HEK293 (cell line): ENCODE measurements at regions of chr14 and their contacts with region 1.

Region 1: DNA sequence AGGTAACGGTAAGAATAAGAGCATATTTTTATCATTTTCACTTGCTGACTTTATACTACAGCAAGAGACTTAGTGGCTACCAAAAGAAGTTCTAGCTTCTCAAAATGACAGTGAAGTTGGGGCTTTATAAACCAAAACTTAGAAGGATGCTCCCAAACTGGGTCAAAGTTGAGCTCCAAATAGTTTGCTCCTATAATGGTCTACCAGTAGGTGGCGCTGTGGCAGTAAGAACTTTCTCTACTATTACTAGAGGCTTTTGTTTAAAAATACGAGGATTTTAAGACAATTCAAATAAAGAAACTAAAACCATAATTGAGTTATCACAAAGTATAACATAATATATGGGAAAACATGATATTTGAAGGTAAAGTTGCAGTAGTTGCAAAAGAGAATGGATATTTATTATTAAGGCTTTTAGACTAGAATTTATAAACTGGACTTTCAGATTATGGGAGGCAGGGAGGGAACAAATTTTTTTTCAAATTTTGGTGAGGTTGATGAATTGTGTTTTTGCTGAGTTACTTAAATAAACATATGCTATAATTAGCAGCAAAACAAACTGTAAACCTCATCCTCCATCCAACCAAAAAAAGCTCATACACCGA is 75.0 kb downstream of the TGFB3 start:
- H3K4me3 ChIP-seq: no peak overlapping the region
- H3K27ac ChIP-seq: no peak overlapping the region
- H3K4me1 ChIP-seq: peaks cover 17% of the 10 kb centered on the region
- CTCF ChIP-seq: 0 out of 2 replicates have a peak, but pooled peaks have one; percentile 6

Region 2: GRCh38 chr14:75794615-75795038 is 112.2 kb before region 1 on chr14:
- CTCF ChIA-PET with region 1: interaction called, 16 read pairs
- POLR2A ChIA-PET with region 1: no interaction called
- H3K4me3 ChIP-seq: no peak overlapping the region
- H3K27ac ChIP-seq: no peak overlapping the region
- H3K4me1 ChIP-seq: no peaks in the 10 kb centered on the region
- CTCF ChIP-seq: peak; percentile 70

Region 3: GRCh38 chr14:75884198-75884611 is 22.6 kb before region 1 on chr14:
- CTCF ChIA-PET with region 1: interaction called, 12 read pairs
- POLR2A ChIA-PET with region 1: no interaction called
- H3K4me3 ChIP-seq: no peak overlapping the region
- H3K27ac ChIP-seq: no peak overlapping the region
- H3K4me1 ChIP-seq: no peaks in the 10 kb centered on the region
- CTCF ChIP-seq: no peak

Region 4: DNA sequence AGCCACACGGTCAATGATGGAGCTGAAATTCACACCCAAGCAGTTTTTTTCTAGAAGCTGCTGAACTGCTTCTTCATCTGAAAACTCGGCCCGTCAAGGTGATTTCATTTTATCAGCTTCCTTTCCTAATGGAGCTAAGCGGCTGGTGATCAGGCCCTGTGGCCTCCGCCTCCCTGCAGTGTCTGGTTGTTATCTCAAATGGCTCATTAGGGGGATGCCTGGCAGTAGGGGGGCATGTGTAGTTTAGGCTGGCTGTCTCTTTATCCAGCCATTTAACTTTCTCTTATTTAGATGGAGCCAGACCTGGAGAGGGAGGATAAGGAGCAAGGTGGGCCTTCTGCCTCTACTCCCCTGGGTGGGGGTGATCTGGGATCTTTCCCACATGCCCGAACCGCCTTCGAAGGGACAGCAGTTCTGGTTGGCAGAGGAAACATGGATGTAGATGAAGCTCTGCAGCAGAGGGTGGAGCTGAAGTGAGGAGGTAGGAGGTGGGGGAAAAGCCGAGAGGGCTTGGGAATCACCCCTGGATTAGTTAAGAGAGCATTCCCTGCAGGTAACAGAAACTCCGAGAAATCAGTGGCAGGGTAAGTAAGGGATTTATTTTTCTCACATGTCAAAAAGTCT is 10.7 kb after region 1 on chr14:
- CTCF ChIA-PET with region 1: interaction called, 28 read pairs
- POLR2A ChIA-PET with region 1: interaction called, 3 read pairs
- H3K4me3 ChIP-seq: no peak overlapping the region
- H3K27ac ChIP-seq: no peak overlapping the region
- H3K4me1 ChIP-seq: 0 out of 2 replicates have a peak, but pooled peaks cover 3% of the 10 kb centered on the region
- CTCF ChIP-seq: no peak

Region 5: GRCh38 chr14:75976826-75977581 is 70.2 kb after region 1 on chr14:
- CTCF ChIA-PET with region 1: interaction called, 82 read pairs
- POLR2A ChIA-PET with region 1: no interaction called
- H3K4me3 ChIP-seq: no peak overlapping the region
- H3K27ac ChIP-seq: no peak overlapping the region
- H3K4me1 ChIP-seq: peaks cover 7% of the 10 kb centered on the region
- CTCF ChIP-seq: no peak